Naive thymus-derived CD4-positive, alpha-beta T cell (primary cell): ENCODE measurements at regions of chr19 and their contacts with region 1.

Region 1: GRCh38 chr19:52962394-52963246 is at the start of gene ZNF816:
- DNase-seq: peak; percentile 94 to 99 (median 98)
- ATAC-seq: peak; percentile 100
- H3K4me3 ChIP-seq: peak within 1 kb of the TSS; percentile 77
- H3K4me3 Mint-ChIP-seq: peak within 1 kb of the TSS; percentile 87 to 96 (median 94)
- H3K27ac ChIP-seq: peak within 1 kb of the TSS; percentile 73
- H3K27ac Mint-ChIP-seq: peak within 1 kb of the TSS; percentile 82 to 95 (median 93)
- H3K4me1 ChIP-seq: peaks cover 12 to 14% of the 10 kb centered on the region in 2 donors
- H3K4me1 Mint-ChIP-seq: peaks cover 15 to 33% (median 29%) of the 10 kb centered on the region in 7 donors
- H3K27me3 ChIP-seq: no peaks in the 10 kb centered on the region
- H3K27me3 Mint-ChIP-seq: no peaks in the 10 kb centered on the region
- total RNA-seq, gene ZNF816: 5.0 to 25.7 (median 11.0) TPM

Region 2: GRCh38 chr19:52535771-52536447 is 426.7 kb before region 1 on chr19:
- CTCF ChIA-PET with region 1: no interaction called
- POLR2A ChIA-PET with region 1: no interaction called
- intact Hi-C with region 1: loop called in 1 of 2 experiments (anchors 1 kb)
- DNase-seq: peak; percentile 60 to 87 (median 82)
- ATAC-seq: peak; percentile 99
- H3K4me3 ChIP-seq: peak overlapping the region; percentile 84
- H3K4me3 Mint-ChIP-seq: peak overlapping the region; percentile 83 to 99 (median 90)
- H3K27ac ChIP-seq: peak overlapping the region; percentile 87
- H3K27ac Mint-ChIP-seq: peak overlapping the region; percentile 69 to 95 (median 87)
- H3K4me1 ChIP-seq: no peaks in the 10 kb centered on the region
- H3K4me1 Mint-ChIP-seq: peaks cover 16 to 44% (median 34%) of the 10 kb centered on the region in 7 donors
- H3K27me3 ChIP-seq: no peaks in the 10 kb centered on the region
- H3K27me3 Mint-ChIP-seq: no peaks in the 10 kb centered on the region

Region 3: DNA sequence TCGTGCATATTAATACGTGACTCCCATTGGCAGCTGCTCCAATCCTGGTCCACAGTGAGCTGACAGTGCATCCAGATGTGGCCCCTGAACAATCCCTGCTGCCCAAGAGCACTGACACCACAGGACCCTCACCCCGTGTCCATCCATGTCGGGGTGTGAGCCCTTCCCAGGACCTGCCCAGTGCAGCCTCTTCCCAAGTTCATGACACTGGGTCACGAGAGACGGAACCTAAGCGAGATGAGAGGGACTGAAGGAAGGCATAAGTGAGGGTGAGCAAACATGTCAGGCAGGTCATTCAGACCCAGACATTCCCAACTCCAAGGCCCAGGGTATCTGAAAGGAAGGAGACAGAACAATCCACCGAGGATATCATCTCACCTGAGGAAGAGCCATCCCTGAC is 108.7 kb before region 1 on chr19:
- CTCF ChIA-PET with region 1: no interaction called
- POLR2A ChIA-PET with region 1: no interaction called
- intact Hi-C with region 1: loop called (anchors 2 to 5 kb)
- DNase-seq: no peak
- ATAC-seq: no peak
- H3K4me3 ChIP-seq: no peak overlapping the region
- H3K4me3 Mint-ChIP-seq: peak overlapping the region in 1 of 10 donors; percentile 53
- H3K27ac ChIP-seq: no peak overlapping the region
- H3K27ac Mint-ChIP-seq: no peak overlapping the region
- H3K4me1 ChIP-seq: no peaks in the 10 kb centered on the region
- H3K4me1 Mint-ChIP-seq: peaks cover 15 to 39% (median 32%) of the 10 kb centered on the region in 7 donors
- H3K27me3 ChIP-seq: no peaks in the 10 kb centered on the region
- H3K27me3 Mint-ChIP-seq: no peaks in the 10 kb centered on the region

Region 4: DNA sequence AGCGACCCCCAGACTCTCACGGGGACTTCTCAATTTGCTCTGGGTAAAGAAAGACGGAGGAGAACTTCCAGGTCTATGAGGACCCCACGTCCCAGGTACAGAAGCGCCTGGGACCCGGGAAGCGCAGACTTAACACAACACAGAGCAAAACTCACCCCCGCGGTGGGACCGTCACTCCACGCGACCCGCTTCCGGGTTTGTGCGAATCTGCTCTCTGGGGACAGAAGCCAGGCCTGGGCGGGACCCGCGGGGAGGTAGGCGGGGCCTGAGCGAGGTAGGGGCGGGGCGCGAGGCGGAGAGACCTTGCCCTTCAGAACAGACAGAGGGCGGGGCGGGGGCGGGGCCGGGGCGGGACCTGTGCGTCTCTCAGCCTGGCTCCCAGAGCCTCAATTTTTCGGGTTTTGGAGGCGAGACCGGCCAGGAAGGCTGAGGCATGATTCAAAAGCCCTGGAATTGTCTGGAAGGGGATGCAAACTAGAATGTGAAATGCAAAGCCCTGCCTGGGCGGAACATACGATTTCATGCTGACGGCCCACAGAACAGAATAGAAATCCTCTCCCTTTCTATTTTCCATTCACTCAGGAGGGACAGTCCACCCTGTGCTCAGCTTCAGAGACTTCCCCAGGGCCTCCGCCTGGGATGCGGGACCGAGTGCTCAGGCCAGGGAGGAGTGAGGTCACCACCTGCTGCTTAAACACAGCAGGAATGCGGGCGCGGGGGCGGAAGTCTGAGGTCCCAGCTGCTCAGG is 20.1 kb before region 1 on chr19:
- CTCF ChIA-PET with region 1: no interaction called
- POLR2A ChIA-PET with region 1: interaction called, 5 read pairs
- intact Hi-C with region 1: loop called (anchors 1 kb)
- DNase-seq: peak; percentile 88 to 99 (median 95)
- ATAC-seq: peak; percentile 100
- H3K4me3 ChIP-seq: peak overlapping the region; percentile 98
- H3K4me3 Mint-ChIP-seq: peak overlapping the region; percentile 87 to 95 (median 92)
- H3K27ac ChIP-seq: peak overlapping the region; percentile 85
- H3K27ac Mint-ChIP-seq: peak overlapping the region; percentile 33 to 94 (median 89)
- H3K4me1 ChIP-seq: peaks cover 0 to 4% of the 10 kb centered on the region in 2 donors
- H3K4me1 Mint-ChIP-seq: peaks cover 12 to 27% (median 16%) of the 10 kb centered on the region in 7 donors
- H3K27me3 ChIP-seq: no peaks in the 10 kb centered on the region
- H3K27me3 Mint-ChIP-seq: no peaks in the 10 kb centered on the region

Region 5: GRCh38 chr19:53333463-53334449 is 371.1 kb after region 1 on chr19 and contains the start of gene ZNF845:
- CTCF ChIA-PET with region 1: no interaction called
- POLR2A ChIA-PET with region 1: no interaction called
- intact Hi-C with region 1: loop called in 1 of 2 experiments (anchors 10 kb)
- DNase-seq: peak; percentile 91 to 99 (median 97)
- ATAC-seq: peak; percentile 99
- H3K4me3 ChIP-seq: peak within 1 kb of the TSS; percentile 93
- H3K4me3 Mint-ChIP-seq: peak within 1 kb of the TSS; percentile 87 to 97 (median 94)
- H3K27ac ChIP-seq: peak within 1 kb of the TSS; percentile 74
- H3K27ac Mint-ChIP-seq: peak within 1 kb of the TSS; percentile 87 to 97 (median 89)
- H3K4me1 ChIP-seq: peaks cover 0 to 5% of the 10 kb centered on the region in 2 donors
- H3K4me1 Mint-ChIP-seq: peaks cover 14 to 43% (median 22%) of the 10 kb centered on the region in 7 donors
- H3K27me3 ChIP-seq: no peaks in the 10 kb centered on the region
- H3K27me3 Mint-ChIP-seq: peaks cover 0 to 8% (median 6%) of the 10 kb centered on the region in 5 donors
- total RNA-seq, gene ZNF845: 4.6 to 18.9 (median 11.1) TPM

Region 6: GRCh38 chr19:54463531-54464043 is 1501.0 kb after region 1 on chr19 and contains the start of gene LENG9:
- CTCF ChIA-PET with region 1: no interaction called
- POLR2A ChIA-PET with region 1: no interaction called
- intact Hi-C with region 1: loop called in 1 of 2 experiments (anchors 10 kb)
- DNase-seq: peak; percentile 73 to 97 (median 87)
- ATAC-seq: peak; percentile 81
- H3K4me3 ChIP-seq: peak within 1 kb of the TSS; percentile 88
- H3K4me3 Mint-ChIP-seq: peak within 1 kb of the TSS; percentile 84 to 95 (median 92)
- H3K27ac ChIP-seq: peak within 1 kb of the TSS; percentile 71
- H3K27ac Mint-ChIP-seq: peak within 1 kb of the TSS; percentile 86 to 98 (median 93)
- H3K4me1 ChIP-seq: peaks cover 17 to 23% of the 10 kb centered on the region in 2 donors
- H3K4me1 Mint-ChIP-seq: peaks cover 16 to 35% (median 33%) of the 10 kb centered on the region in 7 donors
- H3K27me3 ChIP-seq: peaks cover 0 to 3% of the 10 kb centered on the region in 2 donors
- H3K27me3 Mint-ChIP-seq: peaks cover 5 to 23% (median 7%) of the 10 kb centered on the region in 5 donors
- total RNA-seq, gene LENG9: 3.5 to 6.1 (median 4.3) TPM